ENCODE measurements at regions of chr1 and their contacts with region 1.

Region 1: DNA sequence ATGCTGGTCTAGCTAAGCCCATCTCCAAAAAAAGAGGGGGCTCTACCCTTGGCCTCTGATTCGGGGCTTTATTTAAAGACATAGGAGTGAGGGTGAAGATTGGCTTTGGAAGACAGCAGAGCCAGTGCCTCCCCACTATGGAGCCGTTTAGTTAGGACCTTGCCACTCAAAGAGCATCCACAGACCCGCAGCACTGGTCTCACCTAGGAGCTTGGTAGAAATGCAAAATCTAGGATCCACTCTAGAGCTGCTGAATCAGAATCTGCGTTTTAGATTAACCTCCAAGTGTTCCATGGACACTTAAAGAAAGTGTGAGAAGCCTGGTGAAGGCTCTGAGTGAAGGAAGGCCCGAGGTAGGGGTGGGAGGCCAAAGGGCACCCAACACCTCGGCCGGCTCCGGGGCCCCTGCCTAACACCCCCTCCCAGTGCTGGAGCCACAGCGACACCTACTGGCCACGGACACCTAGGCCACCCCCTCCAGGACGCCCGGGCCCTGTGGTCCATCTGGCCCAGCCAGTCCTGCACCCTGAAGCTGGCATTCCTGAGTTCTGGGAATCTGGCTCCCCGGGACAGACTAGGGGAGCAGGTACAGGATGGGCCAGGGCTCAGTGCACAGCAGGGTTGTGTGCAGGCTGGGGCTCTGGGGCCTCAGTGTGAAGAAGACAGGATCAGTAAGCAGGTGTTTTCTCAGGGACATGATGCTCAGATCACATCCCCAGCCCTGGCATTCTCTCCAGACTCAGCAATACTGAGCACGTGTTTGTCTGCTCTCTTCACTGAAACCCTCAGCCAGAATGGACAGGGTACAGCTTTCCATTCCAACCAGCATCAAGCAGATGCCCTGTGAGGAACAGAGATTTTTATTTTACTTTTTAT is 79.2 kb downstream of the TMEM53 start:
- DNase-seq: peak; percentile 74
- ATAC-seq: peak; percentile 97
- H3K4me3 ChIP-seq: no peak overlapping the region
- H3K27ac ChIP-seq: no peak overlapping the region
- H3K4me1 ChIP-seq: no peaks in the 10 kb centered on the region
- H3K27me3 ChIP-seq: no peaks in the 10 kb centered on the region
- CTCF ChIP-seq: peak; percentile 98

Region 2: GRCh38 chr1:44377925-44378784 is 217.0 kb before region 1 on chr1:
- CTCF ChIA-PET with region 1: interaction called, 15 read pairs
- POLR2A ChIA-PET with region 1: no interaction called
- intact Hi-C with region 1: loop called (anchors 1 kb)
- DNase-seq: peak; percentile 76
- ATAC-seq: peak; percentile 53
- H3K4me3 ChIP-seq: no peak overlapping the region
- H3K27ac ChIP-seq: no peak overlapping the region
- H3K4me1 ChIP-seq: no peaks in the 10 kb centered on the region
- H3K27me3 ChIP-seq: no peaks in the 10 kb centered on the region
- CTCF ChIP-seq: peak; percentile 88

Region 3: DNA sequence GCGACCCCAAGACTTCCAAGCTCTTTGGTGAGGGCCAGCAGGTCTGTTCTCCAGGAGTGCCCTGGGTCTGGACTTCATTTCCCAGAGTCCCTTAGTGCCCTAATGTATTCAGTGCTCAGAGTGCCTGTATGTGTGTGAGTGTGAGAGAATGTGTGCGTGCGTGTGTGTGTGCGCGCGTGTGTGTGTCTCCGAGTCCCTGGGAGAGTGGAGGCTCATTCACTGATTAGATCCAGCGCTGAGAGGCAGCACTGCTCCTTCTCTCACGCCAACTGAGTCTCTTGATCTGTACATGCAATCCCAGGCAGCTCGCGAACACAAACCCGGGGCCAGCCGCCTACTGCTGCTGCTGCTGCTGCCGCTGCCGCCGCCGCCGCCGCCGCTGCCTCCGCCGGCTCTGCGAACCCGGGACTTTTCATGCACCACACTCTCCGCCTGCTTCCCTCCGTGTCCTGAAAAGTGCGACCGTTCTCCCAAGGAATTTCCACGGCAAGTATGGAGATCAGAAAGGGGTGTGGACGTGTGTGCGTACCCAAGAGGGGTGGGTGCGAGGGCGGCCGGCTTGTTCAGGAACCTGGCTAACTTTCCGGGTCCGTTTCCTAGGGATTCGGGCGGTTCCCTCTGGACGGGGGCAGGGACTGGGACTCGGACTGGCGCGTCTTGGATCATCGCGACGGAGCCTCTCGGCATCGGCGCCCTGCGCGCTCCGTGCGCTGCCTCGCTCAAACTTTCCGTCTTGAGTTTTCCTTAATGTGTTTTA is 189.9 kb before region 1 on chr1 and contains the start of gene RNF220:
- CTCF ChIA-PET with region 1: no interaction called
- POLR2A ChIA-PET with region 1: no interaction called
- intact Hi-C with region 1: loop called (anchors 1 kb)
- DNase-seq: peak; percentile 51
- ATAC-seq: peak; percentile 63
- H3K4me3 ChIP-seq: peak within 1 kb of the TSS; percentile 82
- H3K27ac ChIP-seq: no peak within 1 kb of the TSS
- H3K4me1 ChIP-seq: peaks cover 8% of the 10 kb centered on the region; the same call in 1 of the 2 replicates
- H3K27me3 ChIP-seq: peaks cover 20% of the 10 kb centered on the region
- CTCF ChIP-seq: no peak
- total RNA-seq, gene RNF220: 66.6 and 100 TPM in 2 replicates